ENCODE measurements at regions of chr1 and their contacts with region 1.

Region 1: DNA sequence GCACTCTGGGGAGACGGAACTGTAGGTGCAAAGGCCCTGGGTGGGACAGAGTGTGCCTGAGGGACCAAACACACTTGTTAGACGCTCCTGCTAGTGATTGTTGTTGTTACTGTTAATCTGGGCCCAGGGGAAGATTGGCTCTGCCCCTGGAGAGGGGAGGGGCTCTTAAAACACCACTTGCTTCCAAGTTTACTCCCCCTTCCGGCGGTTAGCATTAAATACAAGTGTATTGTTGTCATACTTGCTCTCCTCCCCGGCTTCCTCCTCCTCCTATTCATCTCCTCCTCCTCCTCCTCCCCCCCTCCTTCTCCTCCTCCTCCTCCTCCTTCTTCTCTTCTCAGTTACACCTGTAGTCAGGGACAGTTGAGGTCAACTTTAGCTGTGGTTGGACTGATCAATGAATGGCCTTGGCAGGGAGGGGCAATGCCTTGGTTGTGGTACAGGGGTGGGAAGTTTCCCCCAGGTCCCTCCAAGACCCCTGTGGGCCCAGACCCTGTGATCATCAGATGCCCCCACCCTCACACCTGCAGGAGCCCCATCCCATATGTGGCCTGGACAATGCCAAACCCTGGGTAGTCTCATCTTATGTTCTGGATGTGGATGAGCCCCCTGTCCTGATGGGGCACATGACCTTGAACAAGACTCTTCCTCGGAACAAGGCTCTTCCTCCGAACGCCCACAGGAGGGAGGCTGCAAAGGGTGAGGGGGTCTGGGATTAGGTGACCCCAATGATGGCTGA is 217.3 kb downstream of the PTPRU start:
- DNase-seq: peak; percentile 70
- H3K4me3 Mint-ChIP-seq: no peak overlapping the region
- H3K27ac Mint-ChIP-seq: no peak overlapping the region
- H3K4me1 Mint-ChIP-seq: no peaks in the 10 kb centered on the region
- H3K27me3 Mint-ChIP-seq: peaks cover 32% of the 10 kb centered on the region
- CTCF ChIP-seq: peak; percentile 33

Region 2: DNA sequence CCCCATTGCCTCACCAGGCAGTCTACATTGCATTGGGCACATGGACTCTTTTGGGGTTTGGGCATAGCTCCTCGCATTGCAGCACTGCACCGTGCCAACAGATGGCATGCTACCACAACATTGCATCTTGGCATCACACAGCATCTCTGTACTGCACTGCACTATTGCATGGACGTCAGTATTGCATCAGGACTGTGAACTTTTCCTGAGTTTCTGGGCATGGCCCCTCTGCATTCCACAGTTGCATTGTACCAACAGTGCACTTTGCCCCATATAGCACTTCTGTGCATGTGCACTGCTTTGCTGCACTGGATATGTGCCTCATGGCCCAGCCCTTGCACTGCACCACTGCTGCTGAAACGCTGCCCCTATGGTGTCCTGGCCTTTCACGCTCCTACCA is 207.8 kb before region 1 on chr1:
- CTCF ChIA-PET with region 1: no interaction called
- POLR2A ChIA-PET with region 1: no interaction called
- intact Hi-C with region 1: loop called (anchors 2 kb)
- DNase-seq: peak; percentile 59
- H3K4me3 Mint-ChIP-seq: no peak overlapping the region
- H3K27ac Mint-ChIP-seq: no peak overlapping the region
- H3K4me1 Mint-ChIP-seq: peaks cover 29% of the 10 kb centered on the region
- H3K27me3 Mint-ChIP-seq: no peaks in the 10 kb centered on the region
- CTCF ChIP-seq: peak; percentile 39

Region 3: DNA sequence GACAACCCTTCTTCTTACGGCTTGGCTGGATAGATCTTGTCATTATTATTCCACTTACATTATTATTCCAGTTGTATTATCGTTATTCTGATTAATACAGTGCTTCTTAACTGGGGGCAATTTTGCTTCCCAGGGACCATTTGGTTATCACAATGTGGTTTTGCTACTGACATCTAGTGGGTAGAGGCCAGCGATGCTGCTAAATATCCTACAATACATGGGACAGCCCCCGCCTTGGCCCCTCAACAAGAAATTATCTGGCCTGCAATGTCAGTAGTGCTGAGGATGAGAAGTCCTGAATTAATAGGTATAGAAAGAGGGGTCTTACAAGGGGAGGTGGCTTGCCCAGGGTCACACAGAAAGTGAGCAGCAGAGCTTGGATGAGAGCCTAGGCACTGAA is 111.7 kb before region 1 on chr1:
- CTCF ChIA-PET with region 1: no interaction called
- POLR2A ChIA-PET with region 1: no interaction called
- intact Hi-C with region 1: loop called (anchors 1 kb)
- DNase-seq: peak; percentile 6
- H3K4me3 Mint-ChIP-seq: no peak overlapping the region
- H3K27ac Mint-ChIP-seq: no peak overlapping the region
- H3K4me1 Mint-ChIP-seq: no peaks in the 10 kb centered on the region
- H3K27me3 Mint-ChIP-seq: peaks cover 42% of the 10 kb centered on the region
- CTCF ChIP-seq: no peak

Measured in MCF 10A (cell line).